ENCODE measurements at regions of chr11 and their contacts with region 1.

Region 1: GRCh38 chr11:73661035-73661628 is 14.8 kb downstream of the PLEKHB1 start:
- DNase-seq: peak; percentile 97
- ATAC-seq: peak; percentile 95
- H3K4me3 ChIP-seq: peak overlapping the region; percentile 56
- H3K27ac ChIP-seq: no peak overlapping the region
- H3K4me1 ChIP-seq: peaks cover 13% of the 10 kb centered on the region
- H3K27me3 ChIP-seq: no peaks in the 10 kb centered on the region
- CTCF ChIP-seq: peak; percentile 98

Region 2: GRCh38 chr11:73350908-73351636 is 310.1 kb before region 1 on chr11:
- CTCF ChIA-PET with region 1: interaction called, 6 read pairs
- POLR2A ChIA-PET with region 1: no interaction called
- intact Hi-C with region 1: loop called (anchors 1 kb)
- DNase-seq: peak; percentile 81
- ATAC-seq: peak; percentile 79
- H3K4me3 ChIP-seq: peak overlapping the region; percentile 18; the same call in 1 of the 2 replicates
- H3K27ac ChIP-seq: no peak overlapping the region
- H3K4me1 ChIP-seq: no peaks in the 10 kb centered on the region
- H3K27me3 ChIP-seq: no peaks in the 10 kb centered on the region
- CTCF ChIP-seq: peak; percentile 99

Region 3: DNA sequence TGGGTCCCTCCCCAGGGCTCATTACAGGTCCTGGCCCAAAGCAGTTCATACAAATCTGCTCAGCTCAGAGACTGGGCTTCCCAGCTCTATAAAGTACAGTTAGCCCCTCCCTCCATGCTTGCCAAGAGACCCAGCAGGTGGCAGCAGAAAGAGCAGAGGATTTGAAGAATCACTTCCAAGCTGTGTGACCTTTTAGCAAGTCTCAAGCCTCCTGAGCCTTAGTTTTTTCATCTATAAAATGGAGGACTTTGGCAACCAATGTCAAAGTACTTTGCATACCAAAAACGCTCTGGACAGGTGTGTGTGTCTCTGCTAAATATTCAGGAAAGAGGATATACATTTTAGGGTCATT is 258.3 kb before region 1 on chr11:
- CTCF ChIA-PET with region 1: interaction called, 7 read pairs
- POLR2A ChIA-PET with region 1: no interaction called
- intact Hi-C with region 1: loop called (anchors 2 kb)
- DNase-seq: peak; percentile 56
- ATAC-seq: peak; percentile 70
- H3K4me3 ChIP-seq: no peak overlapping the region
- H3K27ac ChIP-seq: no peak overlapping the region
- H3K4me1 ChIP-seq: no peaks in the 10 kb centered on the region
- H3K27me3 ChIP-seq: no peaks in the 10 kb centered on the region
- CTCF ChIP-seq: peak; percentile 68

Region 4: DNA sequence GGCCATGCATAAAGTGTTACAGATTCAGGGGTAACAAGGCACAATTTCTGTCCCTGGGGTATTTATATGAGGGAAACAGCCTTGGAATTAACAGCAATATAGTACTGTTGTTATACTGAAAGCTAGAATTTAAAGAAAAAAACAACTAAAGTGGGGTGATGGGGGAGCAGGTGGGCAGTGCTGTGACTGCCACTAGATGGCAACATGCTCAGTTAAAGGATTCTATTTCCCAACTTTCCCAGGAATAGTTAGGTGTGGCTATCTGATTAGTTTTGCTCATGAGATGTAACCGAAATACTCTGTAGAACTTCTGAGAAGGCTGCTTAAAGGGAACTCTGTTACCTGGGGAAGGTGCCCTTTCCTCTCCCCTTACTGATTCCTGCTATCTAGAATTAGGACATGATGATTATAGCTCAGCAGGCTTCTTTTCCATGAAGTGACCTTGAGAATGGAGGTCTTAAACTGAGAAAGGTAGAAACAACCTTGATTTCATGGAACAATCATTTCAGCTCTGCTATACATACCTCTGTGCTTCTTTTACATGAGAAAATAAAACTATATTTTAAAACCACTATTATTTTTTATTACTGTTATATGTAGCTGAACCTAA is 182.3 kb before region 1 on chr11:
- CTCF ChIA-PET with region 1: interaction called, 9 read pairs
- POLR2A ChIA-PET with region 1: no interaction called
- intact Hi-C with region 1: loop called (anchors 1 kb)
- DNase-seq: peak; percentile 74
- ATAC-seq: peak; percentile 96
- H3K4me3 ChIP-seq: no peak overlapping the region
- H3K27ac ChIP-seq: no peak overlapping the region
- H3K4me1 ChIP-seq: peaks cover 4% of the 10 kb centered on the region; the same call in 1 of the 2 replicates
- H3K27me3 ChIP-seq: no peaks in the 10 kb centered on the region
- CTCF ChIP-seq: peak; percentile 98

Region 5: DNA sequence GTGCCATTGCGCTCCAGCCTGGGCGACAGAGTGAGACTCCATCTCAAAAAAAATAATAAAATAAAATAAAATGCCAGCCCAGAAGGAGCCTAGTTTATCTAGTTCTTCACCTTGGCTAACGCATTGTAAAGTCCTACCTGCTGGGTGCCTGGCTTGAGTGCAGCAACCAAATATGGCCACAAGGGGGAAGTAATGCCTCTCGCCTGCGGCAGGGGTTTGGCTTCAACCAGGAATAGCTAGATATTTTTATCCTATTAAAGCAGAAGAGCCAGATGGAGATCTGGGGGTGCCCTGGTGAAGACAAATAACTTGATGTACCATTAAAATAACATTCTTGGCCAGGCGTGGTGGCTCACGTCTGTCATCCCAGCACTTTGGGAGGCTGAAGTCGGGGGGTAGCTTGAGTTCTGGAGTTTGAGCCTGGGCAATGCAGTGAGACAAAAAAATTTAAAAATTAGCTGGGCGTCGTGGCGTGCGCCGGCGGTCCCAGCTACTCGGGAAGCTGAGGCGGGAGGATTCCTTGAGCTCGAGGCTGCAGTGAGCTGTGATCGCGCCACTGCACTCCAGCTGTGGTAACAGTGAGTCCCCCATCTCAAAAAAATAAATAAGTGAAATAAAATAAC is 35.3 kb before region 1 on chr11:
- CTCF ChIA-PET with region 1: interaction called, 57 read pairs
- POLR2A ChIA-PET with region 1: interaction called, 3 read pairs
- intact Hi-C with region 1: loop called (anchors 1 kb)
- DNase-seq: peak; percentile 93
- ATAC-seq: peak; percentile 93
- H3K4me3 ChIP-seq: peak overlapping the region; percentile 59
- H3K27ac ChIP-seq: no peak overlapping the region
- H3K4me1 ChIP-seq: peaks cover 5% of the 10 kb centered on the region; the same call in 1 of the 2 replicates
- H3K27me3 ChIP-seq: no peaks in the 10 kb centered on the region
- CTCF ChIP-seq: peak; percentile 92

Measured in PC-3 (cell line).